ENCODE measurements at regions of chr11 and their contacts with region 1.

Region 1: DNA sequence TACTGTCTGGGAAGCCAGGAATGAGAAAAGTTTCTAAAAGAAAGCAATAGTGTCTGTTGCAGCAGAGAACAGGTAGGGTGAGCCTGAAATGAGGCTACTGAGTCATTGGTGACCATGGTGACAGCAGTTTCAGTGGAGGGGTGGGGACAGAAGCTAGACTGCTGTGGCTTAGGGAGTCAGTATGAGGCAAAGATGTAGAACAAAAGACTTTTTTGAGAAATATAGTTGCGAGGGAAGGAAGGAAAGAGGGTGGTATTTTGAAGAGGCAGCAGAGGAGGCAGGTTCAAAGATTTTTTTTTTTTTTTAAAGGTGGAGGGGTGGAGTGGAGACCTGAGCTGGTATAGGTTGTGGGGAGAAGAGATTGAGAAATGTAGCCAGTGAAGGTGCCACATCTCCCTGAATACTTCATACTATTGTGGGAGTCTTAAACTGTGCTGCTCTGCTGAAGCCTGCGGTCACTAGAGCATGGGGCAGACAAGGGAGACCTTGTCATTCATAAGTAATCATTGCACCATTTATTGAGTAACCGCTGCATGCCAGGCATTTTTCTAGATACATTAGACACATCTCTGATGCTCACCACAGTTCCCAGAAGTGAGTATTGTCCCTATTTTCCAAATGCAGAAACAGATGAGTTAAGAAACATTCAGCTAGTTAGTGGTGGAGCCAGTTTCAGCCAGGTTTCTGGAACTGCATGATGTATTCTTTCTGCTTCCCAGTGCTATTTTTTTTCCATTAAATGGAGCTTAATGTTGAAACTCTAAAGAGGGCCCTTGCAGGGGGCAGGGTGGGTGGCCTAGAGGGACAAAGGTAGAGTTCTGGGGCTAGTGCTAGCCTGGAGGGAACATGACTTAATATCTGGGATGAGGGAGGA is 49.9 kb downstream of the STIM1 start:
- DNase-seq: peak in 8 of 9 donors; percentile 45 to 80 (median 72)
- ATAC-seq: peak; percentile 92
- H3K4me3 ChIP-seq: no peak overlapping the region
- H3K4me3 Mint-ChIP-seq: peak overlapping the region; percentile 9 to 72 (median 54)
- H3K27ac ChIP-seq: peak overlapping the region; percentile 59
- H3K27ac Mint-ChIP-seq: peak overlapping the region; percentile 64 to 91 (median 81)
- H3K4me1 ChIP-seq: peaks cover 41 to 57% of the 10 kb centered on the region in 2 donors
- H3K4me1 Mint-ChIP-seq: peaks cover 66 to 93% (median 84%) of the 10 kb centered on the region in 7 donors
- H3K27me3 ChIP-seq: no peaks in the 10 kb centered on the region
- H3K27me3 Mint-ChIP-seq: no peaks in the 10 kb centered on the region

Region 2: GRCh38 chr11:3824714-3825472 is 80.4 kb before region 1 on chr11:
- CTCF ChIA-PET with region 1: no interaction called
- POLR2A ChIA-PET with region 1: no interaction called
- intact Hi-C with region 1: no loop called
- DNase-seq: peak; percentile 65 to 83 (median 77)
- ATAC-seq: peak; percentile 97
- H3K4me3 ChIP-seq: no peak overlapping the region
- H3K4me3 Mint-ChIP-seq: no peak overlapping the region
- H3K27ac ChIP-seq: peak overlapping the region; percentile 38
- H3K27ac Mint-ChIP-seq: peak overlapping the region; percentile 60 to 96 (median 87)
- H3K4me1 ChIP-seq: peaks cover 13 to 14% of the 10 kb centered on the region in 2 donors
- H3K4me1 Mint-ChIP-seq: peaks cover 15 to 46% (median 44%) of the 10 kb centered on the region in 7 donors
- H3K27me3 ChIP-seq: no peaks in the 10 kb centered on the region
- H3K27me3 Mint-ChIP-seq: no peaks in the 10 kb centered on the region

Region 3: GRCh38 chr11:3894128-3894731 is 11.1 kb before region 1 on chr11:
- CTCF ChIA-PET with region 1: interaction called, 8 read pairs
- POLR2A ChIA-PET with region 1: interaction called, 5 read pairs
- intact Hi-C with region 1: loop called in 1 of 2 experiments (anchors 1 kb)
- DNase-seq: peak in 1 of 9 donors; percentile 15
- ATAC-seq: peak; percentile 82
- H3K4me3 ChIP-seq: no peak overlapping the region
- H3K4me3 Mint-ChIP-seq: peak overlapping the region in 8 of 10 donors; percentile 11 to 50 (median 37)
- H3K27ac ChIP-seq: no peak overlapping the region
- H3K27ac Mint-ChIP-seq: peak overlapping the region; percentile 49 to 82 (median 55)
- H3K4me1 ChIP-seq: peaks cover 23 to 27% of the 10 kb centered on the region in 2 donors
- H3K4me1 Mint-ChIP-seq: peaks cover 35 to 70% (median 63%) of the 10 kb centered on the region in 7 donors
- H3K27me3 ChIP-seq: no peaks in the 10 kb centered on the region
- H3K27me3 Mint-ChIP-seq: no peaks in the 10 kb centered on the region

Region 4: DNA sequence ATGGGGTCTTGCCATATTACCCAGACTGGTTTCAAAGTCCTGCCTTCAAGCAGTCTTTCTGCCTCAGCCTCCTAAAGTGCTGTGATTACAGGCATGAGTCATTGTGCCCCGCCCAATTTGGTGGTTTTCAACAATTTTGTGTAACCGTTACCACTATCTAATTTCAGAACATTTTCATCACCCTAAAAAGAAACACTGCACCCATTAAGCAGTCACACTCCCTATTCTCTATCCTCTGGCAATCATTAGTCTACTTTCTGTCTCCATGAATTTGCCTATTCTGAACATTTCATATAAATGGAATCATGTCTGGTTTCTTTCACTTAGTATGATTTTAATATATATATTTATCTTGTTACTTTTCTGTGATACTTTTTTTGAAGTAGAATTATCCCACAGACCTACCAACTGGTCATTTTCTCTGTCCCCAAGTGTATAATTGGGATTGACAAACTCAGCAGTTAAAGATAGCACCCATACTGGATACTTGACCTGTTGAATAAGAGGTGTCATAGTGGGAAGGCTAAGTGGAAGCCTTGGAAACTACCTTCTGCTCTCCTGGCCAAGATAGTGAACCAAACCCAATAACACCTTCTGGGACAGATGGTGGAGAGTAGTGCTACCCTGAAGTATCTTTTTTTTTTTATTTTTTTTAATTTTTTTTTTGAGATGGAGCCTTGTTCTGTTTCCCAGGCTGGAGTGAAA is 15.0 kb after region 1 on chr11:
- CTCF ChIA-PET with region 1: interaction called, 3 read pairs
- POLR2A ChIA-PET with region 1: interaction called, 3 read pairs
- intact Hi-C with region 1: loop called (anchors 1 to 2 kb)
- DNase-seq: peak in 2 of 9 donors; percentile 48 to 62
- ATAC-seq: peak; percentile 86
- H3K4me3 ChIP-seq: no peak overlapping the region
- H3K4me3 Mint-ChIP-seq: peak overlapping the region in 7 of 10 donors; percentile 12 to 66 (median 44)
- H3K27ac ChIP-seq: no peak overlapping the region
- H3K27ac Mint-ChIP-seq: peak overlapping the region in 5 of 9 donors; percentile 22 to 53 (median 30)
- H3K4me1 ChIP-seq: peaks cover 11 to 35% of the 10 kb centered on the region in 2 donors
- H3K4me1 Mint-ChIP-seq: peaks cover 39 to 70% (median 62%) of the 10 kb centered on the region in 7 donors
- H3K27me3 ChIP-seq: no peaks in the 10 kb centered on the region
- H3K27me3 Mint-ChIP-seq: no peaks in the 10 kb centered on the region